MCF 10A (cell line): ENCODE measurements at regions of chr22 and their contacts with region 1.

Region 1: DNA sequence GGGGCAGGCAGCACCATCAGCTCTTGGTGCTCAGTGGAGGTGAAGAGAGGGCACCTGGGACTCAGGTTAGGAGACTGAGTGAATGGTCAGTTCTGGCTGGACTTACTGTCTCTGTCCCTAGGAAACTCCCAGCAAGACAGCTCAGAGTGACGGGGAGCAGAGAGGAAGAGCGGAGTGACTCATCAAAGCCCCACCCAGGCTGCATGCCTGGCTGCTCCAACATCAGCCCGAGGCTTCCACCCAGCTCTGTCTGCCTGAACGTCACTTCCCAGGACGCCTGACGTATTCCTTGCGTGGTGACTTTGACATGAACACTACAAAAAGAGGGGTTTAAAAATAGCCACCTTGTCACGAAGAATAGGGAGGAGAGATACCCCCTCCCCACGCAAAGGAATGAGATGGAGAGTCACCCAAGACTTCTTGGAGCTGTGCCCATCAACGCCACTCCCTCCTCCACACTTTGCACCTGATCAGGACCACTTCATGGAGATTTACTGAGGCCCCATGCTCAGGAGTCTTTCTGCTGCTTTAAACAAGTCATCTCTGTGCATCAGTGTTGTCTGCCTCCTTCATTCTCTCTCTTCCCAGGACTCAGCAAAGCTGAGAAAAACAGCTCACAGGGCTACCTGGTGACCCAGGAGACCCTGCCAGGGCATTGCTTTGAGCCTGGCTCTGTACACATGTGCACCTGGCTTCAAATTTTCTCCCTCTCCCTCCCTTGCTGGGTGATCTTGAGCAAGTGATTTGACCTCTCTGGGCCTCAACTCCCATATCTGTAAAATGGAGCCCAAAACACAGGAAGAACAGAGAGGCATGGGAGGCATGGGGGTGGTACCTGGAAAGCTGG is 83.1 kb downstream of the MN1 start:
- DNase-seq: peak; percentile 91
- H3K4me3 Mint-ChIP-seq: peak overlapping the region; percentile 24
- H3K27ac Mint-ChIP-seq: peak overlapping the region; percentile 98
- H3K4me1 Mint-ChIP-seq: peaks cover 30% of the 10 kb centered on the region
- H3K27me3 Mint-ChIP-seq: no peaks in the 10 kb centered on the region
- CTCF ChIP-seq: no peak

Region 2: GRCh38 chr22:27668828-27669797 is 49.3 kb before region 1 on chr22:
- CTCF ChIA-PET with region 1: no interaction called
- POLR2A ChIA-PET with region 1: no interaction called
- intact Hi-C with region 1: loop called (anchors 2 kb)
- DNase-seq: peak; percentile 71
- H3K4me3 Mint-ChIP-seq: no peak overlapping the region
- H3K27ac Mint-ChIP-seq: peak overlapping the region; percentile 91
- H3K4me1 Mint-ChIP-seq: peaks cover 20% of the 10 kb centered on the region
- H3K27me3 Mint-ChIP-seq: no peaks in the 10 kb centered on the region
- CTCF ChIP-seq: no peak

Region 3: GRCh38 chr22:27705408-27706080 is 12.9 kb before region 1 on chr22:
- CTCF ChIA-PET with region 1: no interaction called
- POLR2A ChIA-PET with region 1: no interaction called
- intact Hi-C with region 1: no loop called
- DNase-seq: peak; percentile 32
- H3K4me3 Mint-ChIP-seq: no peak overlapping the region
- H3K27ac Mint-ChIP-seq: peak overlapping the region; percentile 0
- H3K4me1 Mint-ChIP-seq: peaks cover 11% of the 10 kb centered on the region
- H3K27me3 Mint-ChIP-seq: no peaks in the 10 kb centered on the region
- CTCF ChIP-seq: no peak

Region 4: DNA sequence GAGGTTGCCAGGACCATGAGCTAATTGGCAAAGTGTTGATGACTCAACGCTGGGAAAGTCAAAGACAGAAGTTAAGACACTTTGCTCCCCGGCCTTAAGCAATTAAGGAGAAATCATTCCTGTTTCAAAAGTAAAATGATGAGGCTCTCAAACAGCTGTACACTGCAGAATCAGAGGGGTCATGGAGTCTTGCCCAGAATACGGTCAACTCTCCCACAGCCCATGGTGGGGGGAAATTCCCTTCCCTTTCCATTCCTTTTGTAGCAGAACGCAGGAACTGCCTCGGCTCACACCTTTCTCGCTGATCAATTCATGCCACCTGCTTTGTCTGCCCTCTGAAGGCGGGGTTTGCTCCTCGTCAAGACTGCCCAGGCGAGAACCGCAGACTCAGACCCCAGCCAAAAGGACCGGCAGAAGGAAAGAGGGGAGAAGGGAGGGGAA is 30.4 kb after region 1 on chr22:
- CTCF ChIA-PET with region 1: interaction called, 5 read pairs
- POLR2A ChIA-PET with region 1: interaction called, 7 read pairs
- intact Hi-C with region 1: loop called (anchors 5 kb)
- DNase-seq: peak; percentile 82
- H3K4me3 Mint-ChIP-seq: peak overlapping the region; percentile 44
- H3K27ac Mint-ChIP-seq: peak overlapping the region; percentile 88
- H3K4me1 Mint-ChIP-seq: peaks cover 61% of the 10 kb centered on the region
- H3K27me3 Mint-ChIP-seq: no peaks in the 10 kb centered on the region
- CTCF ChIP-seq: no peak